ENCODE measurements at regions of chr3 and their contacts with region 1.

Region 1: GRCh38 chr3:150495563-150496168 is 50.6 kb downstream of the SERP1 start:
- H3K4me3 Mint-ChIP-seq: no peak overlapping the region
- H3K27ac Mint-ChIP-seq: no peak overlapping the region
- H3K4me1 Mint-ChIP-seq: peaks cover 16% of the 10 kb centered on the region
- H3K27me3 Mint-ChIP-seq: no peaks in the 10 kb centered on the region

Region 2: DNA sequence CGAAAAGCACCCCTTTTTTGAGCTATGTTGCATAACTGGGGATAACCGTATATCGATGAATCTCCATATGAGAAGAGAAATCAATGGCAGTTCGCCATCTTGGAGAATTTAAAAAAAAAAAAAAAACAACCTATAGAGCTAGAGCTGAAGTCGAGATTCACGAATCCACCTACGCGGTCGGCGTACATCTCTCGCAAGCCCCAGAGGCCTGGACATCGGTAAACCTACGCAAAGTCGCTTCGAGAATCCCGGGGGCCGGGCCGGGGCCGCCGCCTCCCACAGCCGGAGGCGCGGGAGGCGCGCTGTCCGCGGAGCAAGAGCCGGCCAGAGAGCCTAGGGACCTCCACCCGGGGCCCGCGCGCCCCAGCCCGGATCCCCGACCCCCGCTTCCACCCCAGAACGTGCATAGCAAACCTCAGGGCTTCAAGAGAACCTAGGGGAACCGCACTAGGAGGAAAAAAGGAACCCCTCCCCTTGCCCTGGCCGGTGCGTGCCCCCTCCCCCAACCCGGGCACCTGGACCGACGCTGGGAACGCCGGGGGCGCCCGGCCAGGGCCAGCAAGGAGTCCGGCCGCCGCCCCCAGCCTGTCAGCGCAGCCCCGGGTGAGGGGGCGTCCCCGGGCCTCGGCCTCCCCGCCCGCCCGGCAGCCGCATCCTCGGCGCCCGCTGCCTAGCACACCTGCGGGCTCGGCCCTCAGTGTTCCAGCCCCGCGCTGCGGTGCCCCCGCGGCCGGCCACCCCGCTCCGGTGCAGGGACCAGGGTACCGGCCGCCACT is 525.5 kb before region 1 on chr3:
- intact Hi-C with region 1: loop called (anchors 10 kb)
- H3K4me3 Mint-ChIP-seq: peak overlapping the region; percentile 76
- H3K27ac Mint-ChIP-seq: no peak overlapping the region
- H3K4me1 Mint-ChIP-seq: peaks cover 20% of the 10 kb centered on the region
- H3K27me3 Mint-ChIP-seq: peaks cover 51% of the 10 kb centered on the region

Region 3: DNA sequence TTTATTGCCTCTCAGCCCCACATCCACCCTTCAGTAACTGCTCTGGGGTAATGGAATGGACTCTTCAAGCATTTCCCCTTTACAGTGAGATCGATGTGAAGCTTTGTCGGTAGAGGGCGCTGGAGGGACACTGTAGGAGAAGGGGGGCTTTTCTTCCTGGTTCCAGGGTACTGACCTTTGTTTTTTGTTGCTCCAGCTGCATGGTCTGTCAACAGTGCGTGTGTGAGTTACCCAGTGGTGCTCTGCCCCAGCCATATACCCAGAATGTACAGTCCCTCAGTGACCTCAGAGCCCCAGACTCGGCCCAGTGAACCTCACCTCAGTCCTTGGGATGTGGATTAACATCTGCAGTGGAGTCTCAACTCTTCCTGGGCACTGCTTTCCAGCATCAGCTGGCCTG is 267.8 kb before region 1 on chr3:
- intact Hi-C with region 1: loop called (anchors 2 kb)
- H3K4me3 Mint-ChIP-seq: no peak overlapping the region
- H3K27ac Mint-ChIP-seq: no peak overlapping the region
- H3K4me1 Mint-ChIP-seq: peaks cover 8% of the 10 kb centered on the region
- H3K27me3 Mint-ChIP-seq: peaks cover 13% of the 10 kb centered on the region

Region 4: DNA sequence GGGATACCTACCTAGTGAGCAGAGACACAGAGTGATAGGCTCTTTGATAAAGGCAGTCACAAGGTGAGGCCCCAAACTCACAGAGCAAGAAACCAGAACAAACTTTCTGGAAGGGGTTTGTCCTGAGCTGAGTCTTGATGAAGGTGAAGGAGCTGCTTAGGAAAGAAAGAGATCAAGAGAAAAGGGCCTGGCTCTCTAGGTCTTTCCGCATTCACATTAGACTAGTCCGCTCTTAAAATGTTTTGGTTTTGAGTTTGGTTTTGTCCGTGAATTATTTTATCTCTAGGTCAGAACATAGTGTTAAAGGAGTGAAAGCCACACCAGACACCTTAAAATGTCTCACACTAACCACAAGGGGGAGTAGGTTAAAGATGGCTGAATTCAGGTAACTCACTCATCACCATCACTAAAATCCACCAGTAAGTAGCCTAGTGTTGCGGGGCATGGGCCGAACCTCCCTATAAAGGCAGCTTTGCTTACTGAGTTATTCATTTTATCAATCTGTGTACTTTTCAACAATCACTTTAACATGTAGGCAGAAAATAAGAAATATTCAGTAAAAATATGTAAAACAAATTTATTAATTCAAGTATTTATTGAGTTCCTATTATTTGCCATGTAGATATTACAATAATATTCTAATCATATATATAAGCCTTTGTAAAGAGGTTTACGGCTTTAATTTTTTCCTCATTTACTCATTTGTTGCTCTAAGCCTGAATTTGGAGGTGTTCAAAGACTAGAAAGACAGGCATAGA is 209.1 kb before region 1 on chr3:
- intact Hi-C with region 1: loop called (anchors 2 kb)
- H3K4me3 Mint-ChIP-seq: no peak overlapping the region
- H3K27ac Mint-ChIP-seq: no peak overlapping the region
- H3K4me1 Mint-ChIP-seq: no peaks in the 10 kb centered on the region
- H3K27me3 Mint-ChIP-seq: peaks cover 3% of the 10 kb centered on the region

Measured in dendritic cell treated with granulocyte-macrophage colony-stimulating factor and Interleukin-4, amounts not matched to agents 40 ng/mL and 50 ng/mL, for 4 days (primary cell).